PC-9 (cell line): ENCODE measurements at regions of chr19 and their contacts with region 1.

Region 1: GRCh38 chr19:54696117-54696548 is 28.1 kb upstream of the KIR3DL3 start:
- DNase-seq: peak in 1 of 2 experiments; percentile 8
- H3K4me3 ChIP-seq: no peak overlapping the region
- H3K27ac ChIP-seq: no peak overlapping the region
- H3K4me1 ChIP-seq: no peaks in the 10 kb centered on the region
- H3K27me3 ChIP-seq: peaks cover 85% of the 10 kb centered on the region
- CTCF ChIP-seq: no peak

Region 2: GRCh38 chr19:54573330-54573872 is 122.7 kb before region 1 on chr19 and contains the start of gene LILRA2:
- CTCF ChIA-PET with region 1: no interaction called
- POLR2A ChIA-PET with region 1: no interaction called
- intact Hi-C with region 1: no loop called
- DNase-seq: no peak
- H3K4me3 ChIP-seq: no peak within 1 kb of the TSS
- H3K27ac ChIP-seq: no peak within 1 kb of the TSS
- H3K4me1 ChIP-seq: no peaks in the 10 kb centered on the region
- H3K27me3 ChIP-seq: peaks cover 85% of the 10 kb centered on the region
- CTCF ChIP-seq: no peak
- total RNA-seq, gene LILRA2: not detected in 2 replicates

Region 3: DNA sequence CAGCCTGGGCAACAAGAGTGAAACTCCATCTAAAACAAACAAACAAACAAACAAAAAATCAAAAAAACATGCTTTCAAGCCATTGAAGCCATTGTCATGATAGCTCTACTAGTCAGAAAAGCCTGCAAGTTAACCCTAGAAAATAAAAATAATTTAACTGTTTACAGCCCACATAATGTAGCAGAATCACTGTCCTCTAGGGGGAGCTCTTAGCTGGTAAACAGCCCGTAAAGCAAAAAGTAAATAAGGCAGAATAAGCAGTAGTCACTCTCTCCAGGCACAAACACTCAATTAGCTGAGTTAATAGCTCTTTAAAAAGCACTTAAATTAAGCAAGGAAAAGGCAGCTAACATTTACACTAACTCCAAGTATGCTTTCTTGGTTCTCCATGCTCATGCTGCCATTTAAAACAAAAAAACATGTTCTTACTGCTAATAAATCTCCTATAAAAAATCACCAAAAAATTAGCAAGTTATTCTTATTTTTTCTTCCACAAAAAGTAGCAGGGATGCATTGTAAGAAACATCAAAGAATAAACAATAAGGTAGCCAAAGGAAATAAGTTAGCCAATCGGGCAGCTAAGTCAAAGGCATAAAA is 22.0 kb before region 1 on chr19:
- CTCF ChIA-PET with region 1: interaction called, 10 read pairs
- POLR2A ChIA-PET with region 1: no interaction called
- intact Hi-C with region 1: no loop called
- DNase-seq: peak in 1 of 2 experiments; percentile 14
- H3K4me3 ChIP-seq: no peak overlapping the region
- H3K27ac ChIP-seq: no peak overlapping the region
- H3K4me1 ChIP-seq: no peaks in the 10 kb centered on the region
- H3K27me3 ChIP-seq: peaks cover 53% of the 10 kb centered on the region
- CTCF ChIP-seq: peak; percentile 92